Activated B cell treated with CpG ODN at 0.5 μM for 24 hours (primary cell): ENCODE measurements at regions of chr3 and their contacts with region 1.

Region 1: DNA sequence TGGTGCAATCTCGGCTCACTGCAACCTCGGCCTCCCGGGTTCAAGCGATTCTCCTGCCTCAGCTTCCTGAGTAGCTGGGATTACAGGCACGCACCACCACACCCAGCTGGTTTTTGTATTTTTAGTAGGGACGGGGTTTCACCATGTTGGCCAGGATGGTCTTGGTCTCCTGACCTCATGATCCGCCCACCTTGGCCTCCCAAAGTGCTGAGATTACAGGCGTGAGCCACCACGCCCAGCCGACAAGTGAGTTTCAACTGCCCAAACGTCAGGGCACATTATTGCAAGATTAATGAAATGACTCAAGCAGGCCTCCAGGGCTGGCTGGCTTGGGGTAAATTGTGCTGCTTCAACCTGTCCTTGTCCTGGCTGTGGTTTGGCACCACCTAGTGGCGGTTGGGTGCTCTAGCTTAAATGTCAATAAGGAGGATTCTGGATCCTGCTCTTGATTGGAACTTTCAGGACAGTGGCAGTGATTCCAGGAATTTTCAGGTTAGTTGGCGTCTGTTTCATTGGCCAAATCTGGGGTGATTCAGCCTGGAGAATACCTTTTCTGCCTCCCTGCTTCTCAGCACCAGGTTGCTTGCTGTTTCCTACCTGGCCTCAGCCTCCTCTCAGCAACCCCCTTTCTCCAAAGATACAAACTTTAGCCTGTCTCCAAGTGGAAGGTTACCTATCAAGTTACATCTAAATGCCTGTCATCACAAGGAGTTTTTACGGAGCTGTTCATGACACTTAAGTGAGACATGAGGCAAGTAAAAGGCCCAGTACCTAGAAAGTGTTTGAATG is 32.4 kb upstream of the SACM1L start:
- DNase-seq: peak; percentile 71
- ATAC-seq: peak; percentile 92
- H3K4me3 Mint-ChIP-seq: no peak overlapping the region
- H3K27ac Mint-ChIP-seq: peak overlapping the region; percentile 78
- H3K4me1 Mint-ChIP-seq: peaks cover 49% of the 10 kb centered on the region
- H3K27me3 Mint-ChIP-seq: no peaks in the 10 kb centered on the region
- CTCF ChIP-seq: no peak

Region 2: DNA sequence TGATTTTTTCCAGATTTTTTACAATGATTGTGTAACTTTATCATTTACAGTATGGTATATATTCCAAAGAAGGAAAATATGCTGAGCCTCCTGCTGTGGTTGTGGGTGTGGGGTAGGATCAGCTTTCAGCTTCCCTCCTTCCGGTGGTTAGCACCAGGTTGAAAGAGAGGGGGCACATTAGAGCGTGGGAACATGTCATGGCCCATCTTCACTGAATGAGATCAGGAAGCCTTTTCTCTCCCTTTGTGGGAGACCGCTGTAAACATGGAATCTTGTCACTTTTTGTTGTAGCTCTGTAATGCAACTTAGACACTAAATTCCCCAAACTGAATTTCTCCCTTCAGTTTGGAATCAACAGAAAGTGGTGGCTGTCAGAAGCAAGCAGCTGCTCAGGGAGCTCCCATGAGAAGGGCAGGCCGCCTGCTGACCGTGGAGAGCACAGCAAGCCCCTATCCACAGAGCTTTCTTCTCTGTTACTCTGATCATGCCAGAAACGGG is 148.9 kb before region 1 on chr3:
- CTCF ChIA-PET with region 1: interaction called, 357 read pairs
- POLR2A ChIA-PET with region 1: interaction called, 9 read pairs
- intact Hi-C with region 1: loop called (anchors 1 kb)
- DNase-seq: no peak
- ATAC-seq: no peak
- H3K4me3 Mint-ChIP-seq: no peak overlapping the region
- H3K27ac Mint-ChIP-seq: no peak overlapping the region
- H3K4me1 Mint-ChIP-seq: no peaks in the 10 kb centered on the region
- H3K27me3 Mint-ChIP-seq: no peaks in the 10 kb centered on the region
- CTCF ChIP-seq: no peak

Region 3: DNA sequence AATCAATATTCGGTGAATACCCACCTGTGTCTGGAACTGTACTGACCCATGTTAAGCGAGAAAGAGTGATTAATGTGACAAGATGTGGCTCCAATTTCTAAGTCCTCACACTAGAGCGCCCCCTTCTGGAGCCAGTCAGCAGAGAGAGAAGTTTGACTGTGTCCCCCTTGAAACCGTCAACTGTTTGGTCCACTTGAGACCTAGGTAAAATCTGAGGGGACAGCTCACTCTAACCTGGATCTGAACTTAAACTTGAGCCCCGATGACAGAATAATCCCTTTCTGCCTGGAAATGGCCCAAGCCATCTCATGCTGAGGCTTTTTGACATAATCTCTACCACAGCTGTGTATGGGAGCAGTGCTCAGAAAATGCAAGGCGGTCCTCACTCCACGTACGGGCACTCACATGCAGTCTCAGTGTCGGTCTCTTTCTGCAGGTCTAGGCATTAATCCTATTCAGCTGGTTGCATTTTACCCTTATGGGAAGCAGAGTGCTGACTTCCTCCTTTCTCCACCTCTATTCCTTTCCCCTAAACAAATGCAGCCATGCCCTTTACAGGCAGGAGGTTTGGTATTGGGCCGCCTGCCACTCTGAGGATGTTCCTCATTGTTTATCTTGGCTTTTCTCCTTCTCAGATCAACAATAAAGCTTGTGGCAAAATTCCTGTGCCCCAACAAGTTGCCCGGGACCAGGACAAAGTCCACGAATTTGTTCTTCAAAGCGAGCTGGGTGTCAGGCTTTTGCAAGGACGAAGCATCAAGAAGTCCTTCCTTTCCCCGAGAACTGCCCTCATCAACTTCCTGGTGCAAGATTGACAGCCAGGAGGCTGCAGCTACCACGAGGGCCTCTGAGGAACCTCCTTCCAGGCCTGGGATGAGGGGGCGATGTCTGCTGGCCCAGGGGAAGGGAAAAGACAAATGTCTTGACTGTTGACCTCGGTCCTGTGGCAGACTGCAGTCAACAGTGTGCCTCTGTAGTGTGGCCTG is 109.8 kb before region 1 on chr3:
- CTCF ChIA-PET with region 1: interaction called, 17 read pairs
- POLR2A ChIA-PET with region 1: no interaction called
- intact Hi-C with region 1: no loop called
- DNase-seq: no peak
- ATAC-seq: no peak
- H3K4me3 Mint-ChIP-seq: no peak overlapping the region
- H3K27ac Mint-ChIP-seq: no peak overlapping the region
- H3K4me1 Mint-ChIP-seq: peaks cover 14% of the 10 kb centered on the region
- H3K27me3 Mint-ChIP-seq: no peaks in the 10 kb centered on the region
- CTCF ChIP-seq: no peak

Region 4: GRCh38 chr3:45612918-45613602 is 43.7 kb before region 1 on chr3:
- CTCF ChIA-PET with region 1: interaction called, 4 read pairs
- POLR2A ChIA-PET with region 1: no interaction called
- intact Hi-C with region 1: loop called (anchors 5 kb)
- DNase-seq: no peak
- ATAC-seq: peak; percentile 76
- H3K4me3 Mint-ChIP-seq: peak overlapping the region; percentile 70
- H3K27ac Mint-ChIP-seq: peak overlapping the region; percentile 68
- H3K4me1 Mint-ChIP-seq: peaks cover 86% of the 10 kb centered on the region
- H3K27me3 Mint-ChIP-seq: no peaks in the 10 kb centered on the region
- CTCF ChIP-seq: no peak

Region 5: GRCh38 chr3:45688882-45689756 is 32.4 kb after region 1 on chr3 and contains the start of gene SACM1L:
- CTCF ChIA-PET with region 1: interaction called, 25 read pairs
- POLR2A ChIA-PET with region 1: interaction called, 17 read pairs
- intact Hi-C with region 1: no loop called
- DNase-seq: peak; percentile 90
- ATAC-seq: peak; percentile 88
- H3K4me3 Mint-ChIP-seq: peak within 1 kb of the TSS; percentile 88
- H3K27ac Mint-ChIP-seq: peak within 1 kb of the TSS; percentile 98
- H3K4me1 Mint-ChIP-seq: peaks cover 61% of the 10 kb centered on the region
- H3K27me3 Mint-ChIP-seq: peaks cover 3% of the 10 kb centered on the region
- CTCF ChIP-seq: no peak
- total RNA-seq, gene SACM1L: 43.1 and 55.5 TPM in 2 replicates

Region 6: GRCh38 chr3:45929042-45929679 is 272.4 kb after region 1 on chr3:
- CTCF ChIA-PET with region 1: interaction called, 6 read pairs
- POLR2A ChIA-PET with region 1: no interaction called
- intact Hi-C with region 1: loop called (anchors 5 kb)
- DNase-seq: peak; percentile 54
- ATAC-seq: peak; percentile 92
- H3K4me3 Mint-ChIP-seq: no peak overlapping the region
- H3K27ac Mint-ChIP-seq: no peak overlapping the region
- H3K4me1 Mint-ChIP-seq: no peaks in the 10 kb centered on the region
- H3K27me3 Mint-ChIP-seq: no peaks in the 10 kb centered on the region
- CTCF ChIP-seq: no peak

Region 7: GRCh38 chr3:46027736-46028397 is 371.1 kb after region 1 on chr3:
- CTCF ChIA-PET with region 1: no interaction called
- POLR2A ChIA-PET with region 1: no interaction called
- intact Hi-C with region 1: no loop called
- DNase-seq: no peak
- ATAC-seq: no peak
- H3K4me3 Mint-ChIP-seq: no peak overlapping the region
- H3K27ac Mint-ChIP-seq: no peak overlapping the region
- H3K4me1 Mint-ChIP-seq: peaks cover 16% of the 10 kb centered on the region
- H3K27me3 Mint-ChIP-seq: no peaks in the 10 kb centered on the region
- CTCF ChIP-seq: no peak